Heart left ventricle (tissue), 16 donors: ENCODE measurements at regions of chr22 and their contacts with region 1.

Region 1: DNA sequence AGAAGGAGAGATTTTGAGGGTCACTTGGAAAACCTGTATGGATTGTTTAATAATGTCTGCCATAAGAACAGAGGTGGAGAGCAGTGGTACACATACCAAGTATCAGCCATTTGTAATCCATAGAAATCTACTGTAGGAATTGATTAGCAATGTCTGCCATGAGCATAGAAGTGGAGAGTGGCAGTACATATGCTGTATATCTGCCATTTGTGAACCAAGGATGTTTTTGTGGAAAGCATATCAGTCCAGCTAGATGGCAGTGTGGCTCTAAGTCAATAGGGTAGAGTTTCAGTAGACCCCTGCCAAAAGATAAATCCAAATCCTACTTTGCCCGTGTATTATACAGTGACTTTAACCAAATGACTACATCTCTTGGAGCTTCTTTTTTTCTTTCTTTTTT is 82.9 kb upstream of the SEZ6L start:
- DNase-seq: no peak
- ATAC-seq: no peak
- H3K4me3 ChIP-seq: no peak overlapping the region
- H3K27ac ChIP-seq: no peak overlapping the region
- H3K4me1 ChIP-seq: no peaks in the 10 kb centered on the region
- H3K27me3 ChIP-seq: peaks cover 0 to 25% (median 5%) of the 10 kb centered on the region in 9 donors
- CTCF ChIP-seq: peak in 4 of 12 donors; percentile 15 to 37 (median 22)
- POLR2A ChIP-seq: no peak

Region 2: GRCh38 chr22:26318975-26319374 is 232.6 kb after region 1 on chr22:
- intact Hi-C with region 1: loop called in 2 of 10 experiments (anchors 10 kb)
- DNase-seq: no peak
- ATAC-seq: no peak
- H3K4me3 ChIP-seq: no peak overlapping the region
- H3K27ac ChIP-seq: no peak overlapping the region
- H3K4me1 ChIP-seq: peaks cover 0 to 6% (median 0%) of the 10 kb centered on the region in 12 donors
- H3K27me3 ChIP-seq: no peaks in the 10 kb centered on the region
- CTCF ChIP-seq: no peak
- POLR2A ChIP-seq: no peak

Region 3: GRCh38 chr22:26330966-26331625 is 244.7 kb after region 1 on chr22:
- intact Hi-C with region 1: loop called in 6 of 10 experiments (anchors 2 to 10 kb)
- DNase-seq: peak in 3 of 5 donors; percentile 12 to 40 (median 36)
- ATAC-seq: peak in 3 of 4 donors; percentile 62 to 72 (median 68)
- H3K4me3 ChIP-seq: no peak overlapping the region
- H3K27ac ChIP-seq: no peak overlapping the region
- H3K4me1 ChIP-seq: no peaks in the 10 kb centered on the region
- H3K27me3 ChIP-seq: peaks cover 0 to 18% (median 4%) of the 10 kb centered on the region in 9 donors
- CTCF ChIP-seq: peak; percentile 54 to 82 (median 76)
- POLR2A ChIP-seq: no peak